CD14-positive monocyte (primary cell): ENCODE measurements at regions of chr15 and their contacts with region 1.

Region 1: DNA sequence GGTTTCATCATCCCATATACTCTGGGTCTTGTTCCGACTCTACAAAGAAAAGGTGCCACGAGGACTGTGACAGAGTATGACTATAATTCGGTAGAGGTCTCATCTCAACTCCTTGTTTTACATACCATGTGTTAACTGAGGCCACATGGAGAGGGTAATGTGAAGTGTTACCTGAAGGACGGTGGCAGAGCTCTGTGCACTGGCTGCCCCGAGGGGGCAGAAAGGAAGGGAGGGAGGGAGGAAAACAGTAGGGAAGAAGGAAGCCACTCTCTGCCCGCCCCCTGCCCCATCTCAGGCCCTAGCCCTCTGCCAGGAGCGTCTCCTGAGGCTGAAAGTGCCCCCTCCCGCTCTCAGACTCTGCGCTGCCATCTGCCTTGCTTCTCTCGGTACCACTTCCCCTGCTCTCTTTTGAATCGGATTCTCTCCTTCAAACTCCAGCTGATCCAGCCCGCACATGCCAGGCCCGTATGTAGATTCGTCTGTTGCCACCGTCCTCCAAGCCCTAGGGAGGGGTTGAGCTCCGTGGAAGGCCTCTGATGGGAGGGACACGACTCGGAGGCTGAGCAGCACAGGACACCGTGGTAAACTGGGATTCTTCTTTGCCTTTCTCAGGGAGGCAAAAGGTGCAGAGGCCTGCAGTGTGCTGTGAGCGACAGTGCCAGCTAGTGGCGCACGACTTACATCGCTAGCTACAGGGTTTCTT is 70.5 kb upstream of the ATP10A start:
- DNase-seq: peak; percentile 25 to 44 (median 40)
- H3K4me3 ChIP-seq: peak overlapping the region in 2 of 3 experiments; percentile 18 to 66
- H3K4me3 Mint-ChIP-seq: peak overlapping the region; percentile 76 to 81
- H3K27ac ChIP-seq: no peak overlapping the region
- H3K27ac Mint-ChIP-seq: peak overlapping the region in 2 of 7 donors; percentile 11 to 57
- H3K4me1 ChIP-seq: peaks cover 0 to 6% of the 10 kb centered on the region in 2 donors
- H3K4me1 Mint-ChIP-seq: peaks cover 6% of the 10 kb centered on the region
- H3K27me3 ChIP-seq: no peaks in the 10 kb centered on the region
- H3K27me3 Mint-ChIP-seq: peaks cover 7 to 14% (median 11%) of the 10 kb centered on the region in 3 donors
- CTCF ChIP-seq: peak; percentile 70

Region 2: DNA sequence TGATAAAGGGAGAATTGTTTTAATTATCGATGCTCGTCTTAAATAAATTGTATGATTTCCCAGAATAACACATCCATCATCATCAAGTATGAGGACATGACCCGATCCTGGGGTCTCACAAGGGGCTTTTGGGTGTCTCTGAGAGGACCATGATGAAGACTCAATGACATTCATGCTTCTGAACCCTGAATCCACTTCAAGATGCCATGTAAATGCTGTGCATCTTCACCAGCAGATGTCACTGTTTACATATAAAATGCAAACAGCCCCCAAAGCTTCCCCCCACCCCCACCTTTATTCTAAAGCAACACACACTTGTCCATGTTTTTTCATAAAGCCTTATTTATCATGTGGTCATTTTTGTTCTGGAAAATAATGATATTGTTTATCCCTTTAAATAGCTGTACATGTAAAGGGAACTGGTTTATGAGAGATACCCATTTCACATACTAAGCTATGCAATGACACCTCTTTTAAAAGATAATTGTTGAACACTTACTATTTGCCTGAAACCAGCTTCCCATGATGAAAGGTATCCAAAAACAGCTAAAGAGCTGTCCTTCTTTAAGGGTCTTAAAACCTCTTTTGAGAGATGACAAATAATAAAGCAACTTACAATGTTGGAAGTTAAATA is 425.1 kb before region 1 on chr15:
- intact Hi-C with region 1: loop called in 1 of 2 experiments (anchors 10 kb)
- DNase-seq: no peak
- H3K4me3 ChIP-seq: no peak overlapping the region
- H3K4me3 Mint-ChIP-seq: no peak overlapping the region
- H3K27ac ChIP-seq: no peak overlapping the region
- H3K27ac Mint-ChIP-seq: peak overlapping the region in 1 of 7 donors; percentile 10
- H3K4me1 ChIP-seq: no peaks in the 10 kb centered on the region
- H3K4me1 Mint-ChIP-seq: no peaks in the 10 kb centered on the region
- H3K27me3 ChIP-seq: no peaks in the 10 kb centered on the region
- H3K27me3 Mint-ChIP-seq: no peaks in the 10 kb centered on the region
- CTCF ChIP-seq: peak; percentile 39

Region 3: DNA sequence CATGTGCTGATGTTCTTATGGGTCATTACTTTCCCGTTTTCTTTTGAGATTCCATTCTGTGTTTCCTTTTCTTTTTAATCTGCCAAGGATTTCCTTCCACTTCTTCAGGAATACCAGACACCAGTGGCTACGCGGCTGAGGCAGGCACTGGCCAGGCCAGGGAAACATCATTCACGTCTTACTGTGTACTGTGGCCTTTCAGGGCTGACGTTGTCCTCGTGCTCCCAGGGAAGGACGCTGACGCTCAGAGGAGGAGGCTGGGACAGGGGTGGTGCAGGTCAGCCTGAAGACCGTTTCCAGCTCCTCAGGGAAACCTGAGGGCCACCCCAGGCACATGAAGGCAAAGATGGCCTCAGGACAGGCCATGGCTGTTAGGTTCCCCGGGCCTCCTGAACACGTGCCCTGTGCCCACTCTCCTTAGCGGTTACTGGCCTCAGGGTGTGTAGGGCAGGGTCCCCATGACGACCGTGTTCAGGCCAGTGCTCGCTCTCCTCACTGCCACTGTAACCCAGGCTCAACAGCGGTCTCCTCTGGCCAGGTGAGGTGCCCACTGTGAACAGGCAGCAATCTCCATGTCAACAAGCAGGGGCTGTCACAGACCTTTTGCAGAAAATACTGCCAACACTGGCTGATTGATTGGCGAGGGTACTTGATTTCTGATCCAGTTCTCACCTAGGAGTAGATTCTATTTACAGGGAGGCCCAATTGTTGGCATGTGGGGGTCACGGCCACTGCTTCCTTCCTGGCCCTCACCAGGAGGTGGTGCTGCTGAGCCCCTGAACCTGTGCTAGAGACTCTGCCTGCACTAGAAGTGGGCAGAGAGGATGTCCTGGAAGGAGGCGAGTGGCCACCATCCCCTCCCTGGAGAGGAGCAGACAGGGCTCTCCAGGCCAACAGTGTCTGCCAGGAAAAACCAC is 240.0 kb before region 1 on chr15:
- intact Hi-C with region 1: loop called in 1 of 2 experiments (anchors 2 kb)
- DNase-seq: peak in 2 of 3 donors; percentile 2 to 3
- H3K4me3 ChIP-seq: no peak overlapping the region
- H3K4me3 Mint-ChIP-seq: no peak overlapping the region
- H3K27ac ChIP-seq: no peak overlapping the region
- H3K27ac Mint-ChIP-seq: no peak overlapping the region
- H3K4me1 ChIP-seq: no peaks in the 10 kb centered on the region
- H3K4me1 Mint-ChIP-seq: no peaks in the 10 kb centered on the region
- H3K27me3 ChIP-seq: no peaks in the 10 kb centered on the region
- H3K27me3 Mint-ChIP-seq: no peaks in the 10 kb centered on the region
- CTCF ChIP-seq: peak; percentile 81

Region 4: DNA sequence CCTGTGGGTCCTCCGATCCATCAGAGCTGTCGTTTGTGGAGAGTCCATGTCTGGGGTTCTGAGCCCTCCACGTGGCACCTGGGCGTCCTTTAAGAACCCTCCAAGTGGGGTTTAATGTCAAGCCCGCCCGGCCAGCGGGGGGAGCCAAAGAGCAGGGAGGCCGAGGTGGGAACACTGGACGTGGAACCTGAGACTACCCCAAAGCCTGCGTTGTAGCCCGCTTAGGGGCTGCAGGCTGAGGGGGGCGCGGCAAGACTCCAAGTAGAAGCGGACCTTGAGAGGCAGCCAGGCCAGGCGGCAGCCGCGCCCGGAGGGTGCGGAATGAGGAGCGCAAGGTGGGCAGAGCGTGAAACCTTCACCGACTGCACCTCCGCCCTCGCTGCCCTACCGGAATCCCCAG is 55.7 kb after region 1 on chr15:
- intact Hi-C with region 1: no loop called
- DNase-seq: no peak
- H3K4me3 ChIP-seq: no peak overlapping the region
- H3K4me3 Mint-ChIP-seq: no peak overlapping the region
- H3K27ac ChIP-seq: no peak overlapping the region
- H3K27ac Mint-ChIP-seq: no peak overlapping the region
- H3K4me1 ChIP-seq: no peaks in the 10 kb centered on the region
- H3K4me1 Mint-ChIP-seq: no peaks in the 10 kb centered on the region
- H3K27me3 ChIP-seq: no peaks in the 10 kb centered on the region
- H3K27me3 Mint-ChIP-seq: peaks cover 1 to 5% (median 1%) of the 10 kb centered on the region in 3 donors
- CTCF ChIP-seq: no peak